ENCODE measurements at regions of chrX and their contacts with region 1.

Region 1: GRCh38 chrX:119488749-119489148 is 20.5 kb downstream of the SLC25A5 start:
- H3K4me3 ChIP-seq: no peak overlapping the region
- H3K27ac ChIP-seq: no peak overlapping the region
- H3K4me1 ChIP-seq: no peaks in the 10 kb centered on the region
- CTCF ChIP-seq: peak; percentile 27; the same call in 1 of the 2 replicates

Region 2: GRCh38 chrX:119273420-119274192 is 215.1 kb before region 1 on chrX:
- CTCF ChIA-PET with region 1: no interaction called
- POLR2A ChIA-PET with region 1: no interaction called
- H3K4me3 ChIP-seq: no peak overlapping the region
- H3K27ac ChIP-seq: no peak overlapping the region
- H3K4me1 ChIP-seq: no peaks in the 10 kb centered on the region
- CTCF ChIP-seq: no peak

Region 3: GRCh38 chrX:119502727-119503483 is 14.2 kb after region 1 on chrX:
- CTCF ChIA-PET with region 1: interaction called, 13 read pairs
- POLR2A ChIA-PET with region 1: interaction called, 4 read pairs
- H3K4me3 ChIP-seq: no peak overlapping the region
- H3K27ac ChIP-seq: no peak overlapping the region
- H3K4me1 ChIP-seq: no peaks in the 10 kb centered on the region
- CTCF ChIP-seq: no peak

Region 4: DNA sequence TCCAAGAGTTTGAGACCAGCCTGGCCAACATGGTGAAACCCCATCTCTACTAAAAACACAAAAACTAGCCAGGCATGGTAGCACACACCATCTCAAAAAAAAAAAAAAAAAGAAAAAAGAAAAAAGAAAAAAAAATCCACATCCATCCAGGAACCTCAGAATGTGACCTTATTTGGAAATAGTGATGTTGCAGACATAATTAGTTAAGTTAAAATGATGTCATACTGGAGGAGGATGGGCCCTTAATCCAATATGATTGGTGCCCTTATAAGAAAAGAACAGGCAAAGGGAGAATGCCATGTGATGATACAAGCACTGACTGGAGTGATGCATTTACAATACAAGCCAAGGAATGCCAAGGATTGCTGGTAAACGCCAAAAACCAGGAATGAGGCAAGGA is 68.6 kb after region 1 on chrX:
- CTCF ChIA-PET with region 1: no interaction called
- POLR2A ChIA-PET with region 1: no interaction called
- H3K4me3 ChIP-seq: no peak overlapping the region
- H3K27ac ChIP-seq: no peak overlapping the region
- H3K4me1 ChIP-seq: no peaks in the 10 kb centered on the region
- CTCF ChIP-seq: no peak

Region 5: GRCh38 chrX:119617517-119618164 is 128.9 kb after region 1 on chrX:
- CTCF ChIA-PET with region 1: no interaction called
- POLR2A ChIA-PET with region 1: no interaction called
- H3K4me3 ChIP-seq: no peak overlapping the region
- H3K27ac ChIP-seq: no peak overlapping the region
- H3K4me1 ChIP-seq: peaks cover 4% of the 10 kb centered on the region; the same call in 1 of the 2 replicates
- CTCF ChIP-seq: no peak